ENCODE measurements at regions of chr7 and their contacts with region 1.

Region 1: GRCh38 chr7:135509903-135510602 is at the start of gene CNOT4:
- DNase-seq: peak; percentile 93 to 99 (median 96)

Region 2: GRCh38 chr7:135035252-135035651 is 474.8 kb before region 1 on chr7:
- intact Hi-C with region 1: no loop called
- DNase-seq: no peak

Region 3: GRCh38 chr7:135557455-135558336 is 47.6 kb after region 1 on chr7 and contains the start of gene NUP205:
- intact Hi-C with region 1: loop called (anchors 1 kb)
- DNase-seq: peak; percentile 41 to 95 (median 72)

Region 4: GRCh38 chr7:136000288-136000913 is 490.3 kb after region 1 on chr7:
- intact Hi-C with region 1: no loop called
- DNase-seq: no peak

Measured in posterior cingulate gyrus (tissue), 11 donors.